ENCODE measurements at regions of chr4 and their contacts with region 1.

Region 1: GRCh38 chr4:153488006-153488891 is 22.1 kb downstream of the TMEM131L start:
- DNase-seq: peak; percentile 66
- H3K4me3 Mint-ChIP-seq: peak overlapping the region; percentile 71
- H3K27ac Mint-ChIP-seq: peak overlapping the region; percentile 93
- H3K4me1 Mint-ChIP-seq: peaks cover 76% of the 10 kb centered on the region
- H3K27me3 Mint-ChIP-seq: no peaks in the 10 kb centered on the region

Region 2: DNA sequence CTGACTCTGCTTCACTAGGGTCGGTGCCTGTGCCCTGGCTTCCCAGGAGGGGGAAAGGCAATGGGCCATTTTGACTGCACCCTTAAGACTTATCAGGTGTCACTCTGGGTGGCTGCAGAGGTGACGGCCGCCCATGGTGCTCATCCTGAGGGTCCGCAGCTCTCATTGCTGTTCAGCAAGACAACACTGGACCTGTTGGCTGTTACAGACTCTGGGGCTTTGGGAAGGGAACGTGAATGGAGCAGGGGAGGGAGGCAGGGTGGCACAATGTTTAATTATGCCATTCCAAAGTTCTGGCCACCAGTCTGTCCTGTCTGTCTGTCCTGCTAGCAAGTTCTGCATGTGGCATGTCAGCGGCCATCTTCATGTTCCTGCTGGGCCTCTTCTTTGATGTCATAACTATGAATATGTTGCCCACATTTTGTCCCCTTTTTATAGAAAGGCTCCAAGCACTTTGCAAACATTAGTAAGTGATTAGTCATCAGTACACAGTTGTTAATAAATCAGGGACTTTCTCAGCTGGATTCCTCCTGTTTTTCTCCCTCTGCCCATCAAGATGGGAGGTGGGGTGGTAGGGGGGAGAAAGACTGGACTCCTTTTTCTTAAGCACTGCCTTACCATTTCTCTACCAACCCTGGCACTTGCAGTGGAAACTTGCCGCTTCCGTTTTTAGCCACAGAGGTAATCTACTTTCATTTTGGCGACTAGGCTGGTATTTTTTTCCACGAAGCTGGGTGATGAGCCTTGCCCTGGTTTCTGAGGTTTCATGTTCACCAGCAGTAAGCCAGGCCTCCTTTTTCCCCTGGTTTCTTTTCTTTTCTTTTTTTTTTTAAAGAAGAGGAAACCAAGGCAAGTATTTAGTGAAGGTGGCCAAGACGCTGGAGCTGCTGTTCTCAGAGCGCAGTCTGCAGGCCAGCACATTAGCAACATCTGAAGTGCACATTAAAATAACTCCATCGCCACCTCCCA is 372.6 kb before region 1 on chr4:
- intact Hi-C with region 1: loop called (anchors 1 kb)
- DNase-seq: peak; percentile 69
- H3K4me3 Mint-ChIP-seq: peak overlapping the region; percentile 56
- H3K27ac Mint-ChIP-seq: peak overlapping the region; percentile 80
- H3K4me1 Mint-ChIP-seq: no peaks in the 10 kb centered on the region
- H3K27me3 Mint-ChIP-seq: peaks cover 6% of the 10 kb centered on the region

Region 3: GRCh38 chr4:153362184-153362583 is 126.1 kb before region 1 on chr4:
- intact Hi-C with region 1: loop called (anchors 1 kb)
- DNase-seq: no peak
- H3K4me3 Mint-ChIP-seq: no peak overlapping the region
- H3K27ac Mint-ChIP-seq: no peak overlapping the region
- H3K4me1 Mint-ChIP-seq: peaks cover 10% of the 10 kb centered on the region
- H3K27me3 Mint-ChIP-seq: no peaks in the 10 kb centered on the region

Region 4: GRCh38 chr4:153466081-153466948 is 21.9 kb before region 1 on chr4 and contains the start of gene TMEM131L:
- intact Hi-C with region 1: loop called (anchors 1 kb)
- DNase-seq: peak; percentile 63
- H3K4me3 Mint-ChIP-seq: peak within 1 kb of the TSS; percentile 89
- H3K27ac Mint-ChIP-seq: peak within 1 kb of the TSS; percentile 90
- H3K4me1 Mint-ChIP-seq: peaks cover 50% of the 10 kb centered on the region
- H3K27me3 Mint-ChIP-seq: no peaks in the 10 kb centered on the region
- total RNA-seq, gene TMEM131L: 39.5 and 42.2 TPM in 2 replicates

Region 5: DNA sequence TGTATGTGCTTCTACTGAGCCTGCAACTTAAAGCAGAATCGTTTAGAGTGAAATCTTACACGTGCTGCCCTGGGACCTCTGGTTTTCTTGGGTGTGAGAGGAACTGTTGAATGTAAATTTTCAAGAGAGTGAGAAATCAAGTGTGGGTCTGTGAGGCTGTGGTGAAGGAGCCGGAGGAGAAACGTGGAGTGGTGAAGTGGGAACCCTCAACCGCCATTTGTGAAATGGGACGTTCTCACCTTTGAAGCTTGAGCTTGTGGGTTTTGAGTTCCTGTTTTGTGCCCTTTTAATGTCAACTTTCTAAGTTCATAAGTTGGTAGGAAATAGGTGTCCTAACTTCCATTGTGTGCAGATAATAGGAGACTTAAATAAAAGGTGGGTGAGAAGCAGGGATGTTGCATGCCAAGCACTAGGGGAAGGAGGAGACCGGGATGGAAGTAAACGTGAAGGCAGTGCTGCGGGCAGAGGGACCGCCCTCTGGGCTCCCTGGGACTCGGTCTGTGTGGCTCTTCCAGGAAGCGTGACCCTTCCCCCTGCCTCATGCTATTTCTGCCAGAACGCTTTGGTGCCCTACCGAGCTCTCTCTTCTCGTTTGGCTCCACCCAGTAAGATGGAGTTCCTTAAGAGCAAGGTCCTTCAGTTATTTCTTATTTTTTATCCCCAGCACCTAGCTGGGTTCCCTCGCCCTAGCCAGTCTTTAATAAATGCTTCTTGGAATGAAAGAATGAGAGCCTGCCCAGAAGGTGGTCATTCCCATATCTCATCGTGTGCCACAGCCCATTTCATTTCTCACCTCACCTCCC is 34.0 kb after region 1 on chr4:
- intact Hi-C with region 1: loop called (anchors 1 kb)
- DNase-seq: peak; percentile 54
- H3K4me3 Mint-ChIP-seq: peak overlapping the region; percentile 60
- H3K27ac Mint-ChIP-seq: peak overlapping the region; percentile 91
- H3K4me1 Mint-ChIP-seq: peaks cover 89% of the 10 kb centered on the region
- H3K27me3 Mint-ChIP-seq: no peaks in the 10 kb centered on the region

Region 6: GRCh38 chr4:153573881-153574802 is 85.9 kb after region 1 on chr4:
- intact Hi-C with region 1: loop called (anchors 1 kb)
- DNase-seq: peak; percentile 28
- H3K4me3 Mint-ChIP-seq: no peak overlapping the region
- H3K27ac Mint-ChIP-seq: peak overlapping the region; percentile 41
- H3K4me1 Mint-ChIP-seq: peaks cover 58% of the 10 kb centered on the region
- H3K27me3 Mint-ChIP-seq: no peaks in the 10 kb centered on the region

Region 7: DNA sequence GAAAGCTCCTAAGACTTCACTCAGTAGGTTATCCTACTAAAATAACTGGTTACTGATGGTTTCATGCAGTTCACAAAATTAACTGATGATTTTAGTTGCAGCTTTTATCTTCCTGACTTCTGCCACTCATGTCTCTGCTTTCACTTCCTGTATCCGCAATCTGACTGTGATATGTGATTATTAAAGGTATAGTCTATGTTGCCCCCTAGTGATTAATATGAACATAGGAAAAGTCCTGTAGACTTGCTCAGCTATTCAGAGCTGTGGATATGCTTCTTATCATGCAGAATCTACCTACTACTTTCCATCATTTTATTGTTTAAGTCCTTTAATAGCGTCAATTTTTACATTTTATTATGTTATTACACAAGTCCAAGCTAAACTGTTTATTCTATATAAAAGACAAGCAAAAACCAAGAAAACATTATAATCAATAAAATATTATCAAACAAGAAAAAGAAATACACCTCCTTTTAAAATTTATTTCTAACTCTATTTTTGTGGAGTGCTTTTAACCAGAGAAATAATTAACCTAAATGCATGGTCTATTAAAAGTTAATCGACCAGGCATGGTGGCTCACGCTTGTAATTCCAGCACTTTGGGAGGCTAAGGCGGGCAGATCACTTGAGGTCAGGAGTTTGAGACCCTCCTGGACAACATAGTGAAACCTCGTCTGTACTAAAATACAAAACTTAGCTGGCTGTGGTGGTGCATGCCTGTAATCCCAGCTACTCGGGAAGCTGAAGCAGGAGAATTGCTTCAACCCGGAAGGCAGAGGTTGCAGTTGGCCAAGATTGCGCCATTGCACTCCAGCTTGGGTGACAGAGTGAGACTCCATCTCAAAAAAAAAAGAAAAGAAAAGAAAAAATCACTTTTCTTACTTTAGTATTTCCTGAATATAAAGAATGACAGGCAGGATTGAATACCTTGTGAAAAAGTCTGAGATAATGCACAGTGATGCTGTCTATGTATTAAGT is 155.4 kb after region 1 on chr4:
- intact Hi-C with region 1: loop called (anchors 1 kb)
- DNase-seq: no peak
- H3K4me3 Mint-ChIP-seq: no peak overlapping the region
- H3K27ac Mint-ChIP-seq: no peak overlapping the region
- H3K4me1 Mint-ChIP-seq: peaks cover 22% of the 10 kb centered on the region
- H3K27me3 Mint-ChIP-seq: no peaks in the 10 kb centered on the region

Measured in activated T-helper 1 cell treated with anti-CD3 and anti-CD28 coated beads, Interleukin-12 subunit alpha, Interleukin-12 subunit beta, Interleukin-2, Interleukin-4 antibody, amounts not matched to agents 30 ng/mL and 10 ng/mL and 1 ng/mL, durations not matched to agents 14 hours and 24 hours and 36 hours (primary cell).